B cell (primary cell): ENCODE measurements at regions of chr6 and their contacts with region 1.

Region 1: DNA sequence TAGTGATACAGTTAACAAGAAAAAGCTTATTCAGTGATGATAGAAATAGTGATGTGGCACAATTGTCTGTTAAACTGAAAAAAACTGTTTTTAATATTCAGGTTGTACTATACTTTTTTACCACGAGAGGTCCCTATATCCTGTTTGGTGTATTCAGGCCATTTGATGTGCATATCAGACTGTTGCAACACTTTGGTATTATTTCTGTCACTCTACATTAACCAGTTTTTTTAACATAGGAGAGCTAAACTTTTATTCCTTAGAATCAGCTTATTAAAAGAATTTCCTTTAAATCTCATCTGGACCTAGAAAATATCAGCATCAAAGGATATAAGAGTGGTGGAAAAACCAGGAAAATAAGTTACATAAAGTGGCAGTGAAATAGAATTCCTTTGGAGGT is 36.8 kb downstream of the TSPYL4 start:
- DNase-seq: peak; percentile 51
- ATAC-seq: no peak
- H3K4me3 ChIP-seq: no peak overlapping the region
- H3K4me3 Mint-ChIP-seq: no peak overlapping the region
- H3K27ac ChIP-seq: no peak overlapping the region
- H3K27ac Mint-ChIP-seq: no peak overlapping the region
- H3K4me1 ChIP-seq: no peaks in the 10 kb centered on the region
- H3K4me1 Mint-ChIP-seq: no peaks in the 10 kb centered on the region
- H3K27me3 ChIP-seq: no peaks in the 10 kb centered on the region
- H3K27me3 Mint-ChIP-seq: no peaks in the 10 kb centered on the region
- CTCF ChIP-seq: peak; percentile 66

Region 2: GRCh38 chr6:115986026-115986425 is 231.0 kb before region 1 on chr6:
- CTCF ChIA-PET with region 1: no interaction called
- POLR2A ChIA-PET with region 1: no interaction called
- intact Hi-C with region 1: no loop called
- DNase-seq: no peak
- ATAC-seq: no peak
- H3K4me3 ChIP-seq: no peak overlapping the region
- H3K4me3 Mint-ChIP-seq: no peak overlapping the region
- H3K27ac ChIP-seq: no peak overlapping the region
- H3K27ac Mint-ChIP-seq: no peak overlapping the region
- H3K4me1 ChIP-seq: no peaks in the 10 kb centered on the region
- H3K4me1 Mint-ChIP-seq: no peaks in the 10 kb centered on the region
- H3K27me3 ChIP-seq: no peaks in the 10 kb centered on the region
- H3K27me3 Mint-ChIP-seq: peaks cover 10% of the 10 kb centered on the region
- CTCF ChIP-seq: no peak

Region 3: DNA sequence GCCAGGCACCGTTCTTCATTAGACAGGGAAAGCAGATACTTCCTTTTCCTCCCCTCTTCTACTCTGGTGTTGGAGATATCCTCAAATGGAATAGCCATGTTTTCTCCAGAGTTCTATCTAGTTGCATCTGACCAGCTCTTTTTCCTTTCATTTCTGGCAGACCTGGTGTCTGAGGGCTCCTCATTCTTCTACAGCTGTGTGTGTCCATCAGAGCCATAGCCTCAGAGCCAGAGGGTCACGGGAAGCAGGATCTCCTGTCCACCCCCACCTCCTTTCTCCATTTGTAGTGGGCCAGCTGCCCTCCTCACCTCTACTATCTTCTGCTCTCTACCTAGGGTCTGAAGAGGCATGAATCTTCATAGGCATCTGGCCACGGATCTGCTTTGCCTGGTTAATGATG is 20.2 kb before region 1 on chr6:
- CTCF ChIA-PET with region 1: interaction called, 10 read pairs
- POLR2A ChIA-PET with region 1: no interaction called
- intact Hi-C with region 1: no loop called
- DNase-seq: no peak
- ATAC-seq: no peak
- H3K4me3 ChIP-seq: no peak overlapping the region
- H3K4me3 Mint-ChIP-seq: no peak overlapping the region
- H3K27ac ChIP-seq: no peak overlapping the region
- H3K27ac Mint-ChIP-seq: no peak overlapping the region
- H3K4me1 ChIP-seq: no peaks in the 10 kb centered on the region
- H3K4me1 Mint-ChIP-seq: no peaks in the 10 kb centered on the region
- H3K27me3 ChIP-seq: no peaks in the 10 kb centered on the region
- H3K27me3 Mint-ChIP-seq: no peaks in the 10 kb centered on the region
- CTCF ChIP-seq: no peak

Region 4: GRCh38 chr6:116206231-116206903 is 10.7 kb before region 1 on chr6:
- CTCF ChIA-PET with region 1: interaction called, 11 read pairs
- POLR2A ChIA-PET with region 1: no interaction called
- intact Hi-C with region 1: no loop called
- DNase-seq: no peak
- ATAC-seq: no peak
- H3K4me3 ChIP-seq: no peak overlapping the region
- H3K4me3 Mint-ChIP-seq: no peak overlapping the region
- H3K27ac ChIP-seq: no peak overlapping the region
- H3K27ac Mint-ChIP-seq: no peak overlapping the region
- H3K4me1 ChIP-seq: no peaks in the 10 kb centered on the region
- H3K4me1 Mint-ChIP-seq: no peaks in the 10 kb centered on the region
- H3K27me3 ChIP-seq: no peaks in the 10 kb centered on the region
- H3K27me3 Mint-ChIP-seq: no peaks in the 10 kb centered on the region
- CTCF ChIP-seq: no peak